ENCODE measurements at regions of chr5 and their contacts with region 1.

Region 1: GRCh38 chr5:124285071-124285470 is 461.4 kb downstream of the ZNF608 start:
- DNase-seq: no peak
- ATAC-seq: no peak
- H3K4me3 ChIP-seq: no peak overlapping the region
- H3K27ac ChIP-seq: no peak overlapping the region
- H3K4me1 ChIP-seq: no peaks in the 10 kb centered on the region
- H3K27me3 ChIP-seq: no peaks in the 10 kb centered on the region
- CTCF ChIP-seq: no peak

Region 2: GRCh38 chr5:124157320-124157719 is 127.8 kb before region 1 on chr5:
- CTCF ChIA-PET with region 1: no interaction called
- POLR2A ChIA-PET with region 1: interaction called, 10 read pairs
- intact Hi-C with region 1: no loop called
- DNase-seq: no peak
- ATAC-seq: no peak
- H3K4me3 ChIP-seq: peak overlapping the region; percentile 52
- H3K27ac ChIP-seq: no peak overlapping the region
- H3K4me1 ChIP-seq: no peaks in the 10 kb centered on the region
- H3K27me3 ChIP-seq: no peaks in the 10 kb centered on the region
- CTCF ChIP-seq: no peak

Measured in PC-3 (cell line).